ENCODE measurements at regions of chr9 and their contacts with region 1.

Region 1: GRCh38 chr9:109469646-109470358 is 28.3 kb downstream of the PTPN3 start:
- DNase-seq: peak; percentile 77
- H3K4me3 ChIP-seq: no peak overlapping the region
- H3K27ac ChIP-seq: no peak overlapping the region
- H3K4me1 ChIP-seq: peaks cover 8% of the 10 kb centered on the region
- H3K27me3 ChIP-seq: no peaks in the 10 kb centered on the region
- CTCF ChIP-seq: peak; percentile 23 to 84 (median 80)
- POLR2A ChIP-seq: no peak

Region 2: GRCh38 chr9:109244157-109245132 is 225.4 kb before region 1 on chr9:
- intact Hi-C with region 1: loop called (anchors 10 kb)
- DNase-seq: peak; percentile 76
- H3K4me3 ChIP-seq: no peak overlapping the region
- H3K27ac ChIP-seq: no peak overlapping the region
- H3K4me1 ChIP-seq: peaks cover 7% of the 10 kb centered on the region
- H3K27me3 ChIP-seq: no peaks in the 10 kb centered on the region
- CTCF ChIP-seq: peak; percentile 80 to 86 (median 82)
- POLR2A ChIP-seq: no peak

Region 3: GRCh38 chr9:109297899-109298298 is 171.9 kb before region 1 on chr9:
- intact Hi-C with region 1: no loop called
- DNase-seq: no peak
- H3K4me3 ChIP-seq: no peak overlapping the region
- H3K27ac ChIP-seq: no peak overlapping the region
- H3K4me1 ChIP-seq: no peaks in the 10 kb centered on the region
- H3K27me3 ChIP-seq: no peaks in the 10 kb centered on the region
- CTCF ChIP-seq: no peak
- POLR2A ChIP-seq: no peak